Activated naive CD4-positive, alpha-beta T cell treated with anti-CD3 and anti-CD28 coated beads for 36 hours (primary cell): ENCODE measurements at regions of chr1 and their contacts with region 1.

Region 1: GRCh38 chr1:44029906-44030604 is 1.2 kb downstream of the SLC6A9 start:
- DNase-seq: peak; percentile 93
- H3K4me3 Mint-ChIP-seq: peak overlapping the region; percentile 92
- H3K27ac Mint-ChIP-seq: peak overlapping the region; percentile 93
- H3K4me1 Mint-ChIP-seq: peaks cover 25% of the 10 kb centered on the region
- H3K27me3 Mint-ChIP-seq: no peaks in the 10 kb centered on the region

Region 2: GRCh38 chr1:43706598-43707495 is 323.2 kb before region 1 on chr1:
- CTCF ChIA-PET with region 1: no interaction called
- intact Hi-C with region 1: loop called (anchors 1 kb)
- DNase-seq: peak; percentile 94
- H3K4me3 Mint-ChIP-seq: peak overlapping the region; percentile 86
- H3K27ac Mint-ChIP-seq: peak overlapping the region; percentile 53
- H3K4me1 Mint-ChIP-seq: peaks cover 30% of the 10 kb centered on the region
- H3K27me3 Mint-ChIP-seq: no peaks in the 10 kb centered on the region

Region 3: DNA sequence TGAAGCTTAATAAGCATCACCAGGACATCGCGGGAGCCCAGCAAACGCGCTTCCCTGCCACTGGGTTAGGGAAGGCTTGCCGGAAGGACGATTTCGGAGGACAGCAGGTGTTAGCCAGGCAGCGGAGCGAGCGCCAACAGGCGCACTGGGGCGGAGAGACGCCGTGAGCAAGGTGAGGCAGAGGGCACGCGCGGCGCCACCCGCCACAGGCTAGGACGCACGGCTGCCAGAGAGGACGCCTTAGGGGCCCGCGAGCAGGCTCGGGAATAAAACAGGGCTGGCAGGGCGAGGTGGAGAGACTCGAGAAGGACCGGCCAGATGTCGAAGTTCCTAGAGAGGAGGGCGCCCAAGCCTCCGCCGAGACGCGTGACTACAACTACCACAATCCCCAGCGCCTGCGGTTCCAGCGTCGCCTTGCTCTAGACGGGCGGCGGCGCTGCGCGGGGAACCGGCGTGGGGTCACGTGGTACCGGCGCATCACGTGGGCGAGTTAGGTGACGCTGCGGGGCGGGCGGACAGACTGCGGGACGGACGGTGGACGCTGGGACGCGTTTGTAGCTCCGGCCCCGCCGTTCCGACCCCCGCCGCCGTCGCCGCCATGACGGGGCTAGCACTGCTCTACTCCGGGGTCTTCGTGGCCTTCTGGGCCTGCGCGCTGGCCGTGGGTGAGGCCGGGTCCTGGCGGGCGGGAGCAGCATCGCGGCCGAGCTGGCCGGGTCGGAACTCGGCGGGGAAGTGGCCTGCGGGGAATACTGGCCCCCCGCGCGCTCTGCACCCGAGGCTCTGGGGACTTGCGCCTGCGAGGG is 55.4 kb before region 1 on chr1 and contains the start of gene ATP6V0B:
- CTCF ChIA-PET with region 1: no interaction called
- intact Hi-C with region 1: loop called (anchors 2 kb)
- DNase-seq: peak; percentile 97
- H3K4me3 Mint-ChIP-seq: peak within 1 kb of the TSS; percentile 85
- H3K27ac Mint-ChIP-seq: peak within 1 kb of the TSS; percentile 75
- H3K4me1 Mint-ChIP-seq: peaks cover 50% of the 10 kb centered on the region
- H3K27me3 Mint-ChIP-seq: no peaks in the 10 kb centered on the region
- total RNA-seq, gene ATP6V0B: 44.2 to 52.6 TPM

Region 4: GRCh38 chr1:44002606-44003157 is 27.4 kb before region 1 on chr1:
- CTCF ChIA-PET with region 1: interaction called, 82 read pairs
- intact Hi-C with region 1: no loop called
- DNase-seq: no peak
- H3K4me3 Mint-ChIP-seq: no peak overlapping the region
- H3K27ac Mint-ChIP-seq: no peak overlapping the region
- H3K4me1 Mint-ChIP-seq: no peaks in the 10 kb centered on the region
- H3K27me3 Mint-ChIP-seq: no peaks in the 10 kb centered on the region

Region 5: GRCh38 chr1:44354840-44355581 is 325.0 kb after region 1 on chr1 and contains the start of gene ERI3:
- CTCF ChIA-PET with region 1: no interaction called
- intact Hi-C with region 1: loop called (anchors 1 kb)
- DNase-seq: peak; percentile 98
- H3K4me3 Mint-ChIP-seq: peak within 1 kb of the TSS; percentile 82
- H3K27ac Mint-ChIP-seq: peak within 1 kb of the TSS; percentile 48
- H3K4me1 Mint-ChIP-seq: peaks cover 33% of the 10 kb centered on the region
- H3K27me3 Mint-ChIP-seq: no peaks in the 10 kb centered on the region
- total RNA-seq, gene ERI3: 42.4 to 43.0 TPM